Activated CD4-positive, alpha-beta memory T cell treated with anti-CD3 and anti-CD28 coated beads for 36 hours (primary cell): ENCODE measurements at regions of chr11 and their contacts with region 1.

Region 1: DNA sequence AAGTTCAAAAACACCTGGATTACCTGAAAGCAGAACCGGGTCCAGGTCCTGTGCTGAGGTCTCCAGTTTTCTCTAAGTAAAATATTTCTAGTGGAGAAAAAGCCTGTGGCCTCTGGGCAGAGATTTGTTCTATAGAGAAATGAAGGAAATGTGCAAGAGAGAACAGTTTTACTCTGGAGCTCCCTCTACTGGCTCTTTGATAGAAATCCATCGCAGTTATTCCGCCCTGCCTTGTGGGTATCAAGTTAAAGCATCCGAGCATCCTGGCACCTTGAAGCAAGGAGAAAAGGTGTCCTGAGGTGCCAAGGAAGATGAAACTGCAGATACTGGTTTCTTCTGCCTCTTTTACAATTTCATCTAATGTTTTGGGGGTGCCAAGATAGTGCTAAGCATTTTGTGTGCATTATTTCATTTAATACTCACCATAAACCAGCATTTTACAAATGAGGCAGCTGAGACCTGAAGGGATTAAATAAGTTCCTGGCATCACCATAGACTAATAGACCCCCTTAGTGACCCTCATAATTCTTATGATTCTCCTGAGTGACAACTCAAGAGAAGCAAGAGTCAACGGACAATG is 113.1 kb upstream of the HSD17B12 start:
- DNase-seq: no peak
- H3K4me3 Mint-ChIP-seq: no peak overlapping the region
- H3K27ac Mint-ChIP-seq: no peak overlapping the region
- H3K4me1 Mint-ChIP-seq: no peaks in the 10 kb centered on the region
- H3K27me3 Mint-ChIP-seq: peaks cover 40% of the 10 kb centered on the region

Region 2: GRCh38 chr11:43399983-43400630 is 167.4 kb before region 1 on chr11:
- CTCF ChIA-PET with region 1: no interaction called
- POLR2A ChIA-PET with region 1: no interaction called
- intact Hi-C with region 1: no loop called
- DNase-seq: peak; percentile 28
- H3K4me3 Mint-ChIP-seq: no peak overlapping the region
- H3K27ac Mint-ChIP-seq: peak overlapping the region; percentile 72
- H3K4me1 Mint-ChIP-seq: peaks cover 33% of the 10 kb centered on the region
- H3K27me3 Mint-ChIP-seq: no peaks in the 10 kb centered on the region

Region 3: DNA sequence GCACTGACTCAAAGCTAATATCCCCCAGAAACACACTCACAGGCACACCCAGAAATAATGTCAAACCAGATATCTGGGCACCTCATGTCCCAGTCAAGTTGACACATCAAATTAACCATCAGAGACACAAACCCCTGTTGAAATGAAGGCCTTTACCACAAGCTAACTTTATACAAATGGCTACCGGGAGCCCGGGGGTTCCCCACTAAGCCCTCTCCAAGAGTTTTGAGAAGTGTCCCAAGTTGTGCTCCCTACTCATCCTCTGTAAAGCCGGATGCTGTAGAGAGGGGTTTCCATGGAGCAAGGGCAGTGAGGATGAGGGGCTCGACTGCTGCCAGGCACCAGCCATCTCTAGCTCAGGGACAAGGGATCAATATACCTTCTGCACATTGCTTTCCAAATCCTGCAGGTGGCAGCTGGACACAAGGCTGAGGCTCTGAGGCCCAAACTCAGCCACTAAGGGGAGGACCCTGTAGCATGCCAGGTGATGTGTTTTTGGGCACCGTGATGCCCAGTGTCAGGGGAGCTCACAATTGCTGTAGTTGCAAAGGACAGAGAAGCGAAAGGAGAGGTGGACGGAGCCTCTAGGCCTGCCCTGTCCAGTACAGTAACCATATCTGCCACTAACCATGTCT is 63.1 kb before region 1 on chr11:
- CTCF ChIA-PET with region 1: interaction called, 5 read pairs
- POLR2A ChIA-PET with region 1: no interaction called
- intact Hi-C with region 1: loop called (anchors 5 kb)
- DNase-seq: peak; percentile 16
- H3K4me3 Mint-ChIP-seq: no peak overlapping the region
- H3K27ac Mint-ChIP-seq: no peak overlapping the region
- H3K4me1 Mint-ChIP-seq: no peaks in the 10 kb centered on the region
- H3K27me3 Mint-ChIP-seq: peaks cover 11% of the 10 kb centered on the region